ENCODE measurements at regions of chr7 and their contacts with region 1.

Region 1: DNA sequence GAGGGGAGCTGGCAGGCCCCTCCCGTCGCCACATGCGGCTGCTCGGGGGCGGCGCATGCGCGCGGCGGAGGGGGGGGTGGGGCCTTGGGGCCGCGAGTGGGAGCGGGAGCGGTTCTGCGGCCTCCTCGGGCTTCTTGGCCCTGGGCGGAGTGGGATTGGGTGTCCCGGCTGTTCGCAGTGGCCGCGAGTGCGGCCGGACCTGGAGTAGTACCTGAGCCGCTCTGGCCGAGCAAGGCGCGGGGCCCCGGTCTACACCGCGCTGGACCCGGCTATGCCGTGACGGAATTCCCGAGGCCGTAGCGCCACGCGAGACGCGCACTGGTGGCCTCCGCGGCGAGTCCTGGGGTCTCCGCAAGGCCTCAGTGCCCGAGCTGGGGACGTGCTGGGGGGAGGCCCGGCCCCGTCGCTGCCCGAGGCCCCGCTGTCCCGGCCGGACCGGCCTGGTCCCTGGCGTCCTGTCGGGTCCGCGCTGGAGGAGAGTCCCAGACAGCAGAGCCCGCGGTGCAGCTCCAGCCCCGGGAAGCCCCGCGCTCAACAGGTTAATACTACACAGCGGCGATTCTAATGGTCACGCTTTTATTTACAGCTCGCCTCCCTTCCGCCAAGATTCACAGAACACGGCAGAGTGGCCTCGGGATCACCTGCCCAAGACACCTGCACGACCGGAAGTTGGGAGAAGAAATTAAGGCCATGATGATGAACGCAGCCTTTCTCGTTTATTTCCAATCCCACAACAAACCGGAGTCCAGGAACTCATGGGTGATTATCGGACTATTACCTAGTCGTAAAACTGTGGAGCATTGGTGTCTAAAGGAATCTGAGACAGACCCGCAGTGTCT is 671 bp upstream of the PAXIP1 start:
- DNase-seq: peak; percentile 91
- ATAC-seq: peak; percentile 82
- H3K4me3 Mint-ChIP-seq: peak overlapping the region; percentile 91
- H3K27ac Mint-ChIP-seq: peak overlapping the region; percentile 85
- H3K4me1 Mint-ChIP-seq: peaks cover 12% of the 10 kb centered on the region
- H3K27me3 Mint-ChIP-seq: no peaks in the 10 kb centered on the region

Region 2: GRCh38 chr7:155069992-155070751 is 66.6 kb after region 1 on chr7 and contains the start of gene HTR5A:
- CTCF ChIA-PET with region 1: no interaction called
- POLR2A ChIA-PET with region 1: no interaction called
- intact Hi-C with region 1: loop called in 1 of 2 experiments (anchors 1 kb)
- DNase-seq: peak; percentile 93
- ATAC-seq: peak; percentile 100
- H3K4me3 Mint-ChIP-seq: no peak within 1 kb of the TSS
- H3K27ac Mint-ChIP-seq: no peak within 1 kb of the TSS
- H3K4me1 Mint-ChIP-seq: no peaks in the 10 kb centered on the region
- H3K27me3 Mint-ChIP-seq: peaks cover 32% of the 10 kb centered on the region
- total RNA-seq, gene HTR5A: not detected

Region 3: GRCh38 chr7:155109121-155109520 is 105.5 kb after region 1 on chr7:
- CTCF ChIA-PET with region 1: no interaction called
- POLR2A ChIA-PET with region 1: no interaction called
- intact Hi-C with region 1: no loop called
- DNase-seq: no peak
- ATAC-seq: no peak
- H3K4me3 Mint-ChIP-seq: no peak overlapping the region
- H3K27ac Mint-ChIP-seq: no peak overlapping the region
- H3K4me1 Mint-ChIP-seq: no peaks in the 10 kb centered on the region
- H3K27me3 Mint-ChIP-seq: peaks cover 23% of the 10 kb centered on the region

Region 4: GRCh38 chr7:155190688-155191087 is 187.1 kb after region 1 on chr7:
- CTCF ChIA-PET with region 1: no interaction called
- POLR2A ChIA-PET with region 1: no interaction called
- intact Hi-C with region 1: loop called in 1 of 2 experiments (anchors 5 kb)
- DNase-seq: peak; percentile 82
- ATAC-seq: peak; percentile 64
- H3K4me3 Mint-ChIP-seq: no peak overlapping the region
- H3K27ac Mint-ChIP-seq: no peak overlapping the region
- H3K4me1 Mint-ChIP-seq: peaks cover 35% of the 10 kb centered on the region
- H3K27me3 Mint-ChIP-seq: peaks cover 5% of the 10 kb centered on the region

Region 5: GRCh38 chr7:155205368-155206317 is 202.0 kb after region 1 on chr7:
- CTCF ChIA-PET with region 1: no interaction called
- POLR2A ChIA-PET with region 1: no interaction called
- intact Hi-C with region 1: loop called in 1 of 2 experiments (anchors 1 kb)
- DNase-seq: peak; percentile 95
- ATAC-seq: peak; percentile 84
- H3K4me3 Mint-ChIP-seq: peak overlapping the region; percentile 77
- H3K27ac Mint-ChIP-seq: peak overlapping the region; percentile 100
- H3K4me1 Mint-ChIP-seq: peaks cover 60% of the 10 kb centered on the region
- H3K27me3 Mint-ChIP-seq: no peaks in the 10 kb centered on the region

Region 6: GRCh38 chr7:155995183-155995612 is 991.6 kb after region 1 on chr7:
- CTCF ChIA-PET with region 1: no interaction called
- POLR2A ChIA-PET with region 1: no interaction called
- intact Hi-C with region 1: no loop called
- DNase-seq: no peak
- ATAC-seq: no peak
- H3K4me3 Mint-ChIP-seq: no peak overlapping the region
- H3K27ac Mint-ChIP-seq: no peak overlapping the region
- H3K4me1 Mint-ChIP-seq: peaks cover 60% of the 10 kb centered on the region
- H3K27me3 Mint-ChIP-seq: peaks cover 32% of the 10 kb centered on the region